Transverse colon (tissue), 4 donors: ENCODE measurements at regions of chr17 and their contacts with region 1.

Region 1: GRCh38 chr17:41665566-41666236 is 23.0 kb upstream of the EIF1 start:
- DNase-seq: peak; percentile 93
- H3K4me3 ChIP-seq: peak overlapping the region in 3 of 4 donors; percentile 24 to 50 (median 36)
- H3K27ac ChIP-seq: peak overlapping the region; percentile 84 to 88 (median 86)
- H3K4me1 ChIP-seq: peaks cover 0 to 29% (median 22%) of the 10 kb centered on the region in 4 donors
- H3K27me3 ChIP-seq: no peaks in the 10 kb centered on the region
- CTCF ChIP-seq: peak; percentile 93 to 98 (median 97)
- EP300 ChIP-seq: no peak
- POLR2A ChIP-seq: peak; percentile 81

Region 2: GRCh38 chr17:40615295-40615988 is 1050.3 kb before region 1 on chr17:
- in situ Hi-C with region 1: loop called in 2 of 4 experiments (anchors 25 kb)
- intact Hi-C with region 1: no loop called
- DNase-seq: peak; percentile 59
- H3K4me3 ChIP-seq: no peak overlapping the region
- H3K27ac ChIP-seq: peak overlapping the region in 1 of 4 donors; percentile 26
- H3K4me1 ChIP-seq: peaks cover 0 to 27% (median 18%) of the 10 kb centered on the region in 4 donors
- H3K27me3 ChIP-seq: no peaks in the 10 kb centered on the region
- CTCF ChIP-seq: peak; percentile 29 to 55 (median 42)
- EP300 ChIP-seq: no peak
- POLR2A ChIP-seq: no peak

Region 3: DNA sequence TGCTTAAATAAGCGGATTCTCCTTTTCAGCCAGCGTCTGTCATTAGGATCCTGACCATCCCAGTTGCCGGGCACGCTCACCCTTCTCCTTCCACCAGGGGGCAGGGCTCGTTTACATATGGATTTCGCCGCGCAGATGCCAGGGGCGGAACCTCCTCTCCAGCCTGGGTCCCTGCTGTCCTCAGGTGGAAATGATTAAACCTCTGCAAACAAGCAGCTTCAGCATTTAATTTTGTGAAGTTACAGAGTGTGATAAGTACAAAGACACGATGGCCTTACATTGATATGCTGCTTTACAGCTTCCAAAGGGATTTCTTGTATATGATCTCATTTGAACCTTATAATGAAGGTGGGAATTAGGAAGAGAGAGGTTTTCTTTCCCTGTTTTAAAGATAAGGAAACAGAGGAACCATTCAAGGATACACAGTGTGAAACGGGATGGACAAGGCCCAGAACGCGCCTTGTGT is 862.1 kb before region 1 on chr17:
- in situ Hi-C with region 1: loop called in 3 of 4 experiments (anchors 10 to 25 kb)
- intact Hi-C with region 1: loop called (anchors 10 kb)
- DNase-seq: peak; percentile 86
- H3K4me3 ChIP-seq: no peak overlapping the region
- H3K27ac ChIP-seq: no peak overlapping the region
- H3K4me1 ChIP-seq: peaks cover 0 to 5% (median 1%) of the 10 kb centered on the region in 4 donors
- H3K27me3 ChIP-seq: peaks cover 78% of the 10 kb centered on the region
- CTCF ChIP-seq: peak; percentile 79 to 87 (median 81)
- EP300 ChIP-seq: no peak
- POLR2A ChIP-seq: no peak

Region 4: GRCh38 chr17:40818733-40819527 is 846.8 kb before region 1 on chr17:
- in situ Hi-C with region 1: loop called in 2 of 4 experiments (anchors 25 kb)
- intact Hi-C with region 1: no loop called
- DNase-seq: peak; percentile 84
- H3K4me3 ChIP-seq: peak overlapping the region; percentile 60 to 79 (median 76)
- H3K27ac ChIP-seq: peak overlapping the region; percentile 84 to 92 (median 88)
- H3K4me1 ChIP-seq: peaks cover 0 to 18% (median 5%) of the 10 kb centered on the region in 4 donors
- H3K27me3 ChIP-seq: peaks cover 10% of the 10 kb centered on the region
- CTCF ChIP-seq: no peak
- EP300 ChIP-seq: no peak
- POLR2A ChIP-seq: no peak

Region 5: DNA sequence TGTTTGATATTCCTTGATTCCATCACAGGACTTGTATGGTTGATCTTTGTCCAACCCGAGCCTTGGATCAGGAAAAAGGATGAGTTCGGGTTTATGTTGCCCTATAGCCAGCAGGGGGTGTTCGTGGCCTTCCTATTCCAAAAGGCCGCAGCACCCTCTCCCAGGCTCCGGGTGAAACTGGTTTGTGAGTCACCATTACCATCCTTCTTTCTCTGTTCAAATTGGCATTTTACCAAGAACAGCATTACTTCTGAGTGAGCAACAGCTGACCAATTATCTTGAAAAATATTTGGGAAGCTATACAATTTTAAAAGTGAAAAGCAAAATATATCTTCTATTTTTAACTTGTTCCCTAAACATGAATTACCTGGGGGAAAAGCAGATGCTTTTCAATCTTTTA is 756.4 kb before region 1 on chr17:
- in situ Hi-C with region 1: loop called in 2 of 4 experiments (anchors 10 kb)
- intact Hi-C with region 1: loop called (anchors 10 kb)
- DNase-seq: peak; percentile 86
- H3K4me3 ChIP-seq: no peak overlapping the region
- H3K27ac ChIP-seq: peak overlapping the region; percentile 21 to 49 (median 37)
- H3K4me1 ChIP-seq: peaks cover 9 to 24% (median 9%) of the 10 kb centered on the region in 4 donors
- H3K27me3 ChIP-seq: no peaks in the 10 kb centered on the region
- CTCF ChIP-seq: peak; percentile 61 to 91 (median 75)
- EP300 ChIP-seq: no peak
- POLR2A ChIP-seq: no peak

Region 6: GRCh38 chr17:41548844-41549595 is 116.7 kb before region 1 on chr17:
- in situ Hi-C with region 1: loop called in 3 of 4 experiments (anchors 5 to 10 kb)
- intact Hi-C with region 1: loop called (anchors 5 kb)
- DNase-seq: peak; percentile 92
- H3K4me3 ChIP-seq: peak overlapping the region in 3 of 4 donors; percentile 12 to 37 (median 21)
- H3K27ac ChIP-seq: peak overlapping the region; percentile 80 to 88 (median 84)
- H3K4me1 ChIP-seq: peaks cover 6 to 48% (median 35%) of the 10 kb centered on the region in 4 donors
- H3K27me3 ChIP-seq: no peaks in the 10 kb centered on the region
- CTCF ChIP-seq: peak; percentile 73 to 98 (median 90)
- EP300 ChIP-seq: no peak
- POLR2A ChIP-seq: peak; percentile 16

Region 7: GRCh38 chr17:42039794-42040763 is 374.4 kb after region 1 on chr17:
- in situ Hi-C with region 1: no loop called
- intact Hi-C with region 1: no loop called
- DNase-seq: no peak
- H3K4me3 ChIP-seq: peak overlapping the region in 2 of 4 donors; percentile 6 to 7
- H3K27ac ChIP-seq: no peak overlapping the region
- H3K4me1 ChIP-seq: peaks cover 0 to 6% (median 4%) of the 10 kb centered on the region in 4 donors
- H3K27me3 ChIP-seq: peaks cover 7% of the 10 kb centered on the region
- CTCF ChIP-seq: no peak
- EP300 ChIP-seq: no peak
- POLR2A ChIP-seq: no peak